Vagina (tissue), 2 donors: ENCODE measurements at regions of chr5 and their contacts with region 1.

Region 1: DNA sequence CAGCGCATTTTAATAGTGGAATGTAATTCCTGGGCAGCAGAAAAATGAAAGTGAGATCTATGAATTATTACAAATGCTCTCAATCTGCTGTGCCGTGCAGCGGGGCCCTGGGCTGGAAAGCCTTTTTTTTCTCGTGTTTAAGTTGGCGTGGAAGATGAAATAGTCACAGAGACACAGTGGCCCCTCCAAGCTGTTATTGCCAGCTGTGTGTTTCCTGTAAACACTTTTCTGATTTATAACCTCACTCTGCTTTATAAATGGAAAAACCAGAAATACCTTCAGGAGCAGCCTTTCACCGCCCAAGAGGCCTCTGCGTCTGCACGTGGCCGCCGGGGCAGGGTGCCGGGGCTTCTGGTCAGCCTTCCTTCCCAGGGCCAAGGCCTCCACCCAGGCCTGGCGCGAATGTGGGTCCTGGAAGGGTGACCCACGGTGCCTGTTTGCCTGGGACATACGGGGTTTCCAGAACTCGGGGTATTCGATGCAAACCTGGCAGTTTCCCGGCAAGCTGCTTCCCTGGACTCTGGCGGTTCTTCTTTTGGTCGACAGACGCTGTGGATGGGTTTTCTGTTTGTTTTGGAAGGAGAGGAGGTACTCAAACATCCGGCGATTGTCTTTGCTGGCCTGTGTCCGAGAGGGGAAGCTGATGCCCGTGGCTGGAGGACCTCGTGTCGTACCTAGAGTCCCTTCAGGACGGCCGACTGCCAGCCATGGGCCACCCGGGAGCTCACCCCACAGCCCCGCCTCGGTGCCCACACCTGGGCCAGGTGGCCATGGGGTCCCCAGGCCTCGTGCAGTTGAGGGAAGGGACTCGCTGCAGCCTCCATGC is 256.7 kb downstream of the PARP8 start:
- DNase-seq: no peak
- H3K4me3 ChIP-seq: no peak overlapping the region
- H3K27ac ChIP-seq: no peak overlapping the region
- H3K4me1 ChIP-seq: no peaks in the 10 kb centered on the region
- H3K27me3 ChIP-seq: no peaks in the 10 kb centered on the region
- CTCF ChIP-seq: no peak
- POLR2A ChIP-seq: no peak

Region 2: GRCh38 chr5:50995272-50995942 is 72.3 kb after region 1 on chr5:
- intact Hi-C with region 1: no loop called
- DNase-seq: no peak
- H3K4me3 ChIP-seq: no peak overlapping the region
- H3K27ac ChIP-seq: no peak overlapping the region
- H3K4me1 ChIP-seq: no peaks in the 10 kb centered on the region
- H3K27me3 ChIP-seq: no peaks in the 10 kb centered on the region
- CTCF ChIP-seq: no peak
- POLR2A ChIP-seq: no peak

Region 3: DNA sequence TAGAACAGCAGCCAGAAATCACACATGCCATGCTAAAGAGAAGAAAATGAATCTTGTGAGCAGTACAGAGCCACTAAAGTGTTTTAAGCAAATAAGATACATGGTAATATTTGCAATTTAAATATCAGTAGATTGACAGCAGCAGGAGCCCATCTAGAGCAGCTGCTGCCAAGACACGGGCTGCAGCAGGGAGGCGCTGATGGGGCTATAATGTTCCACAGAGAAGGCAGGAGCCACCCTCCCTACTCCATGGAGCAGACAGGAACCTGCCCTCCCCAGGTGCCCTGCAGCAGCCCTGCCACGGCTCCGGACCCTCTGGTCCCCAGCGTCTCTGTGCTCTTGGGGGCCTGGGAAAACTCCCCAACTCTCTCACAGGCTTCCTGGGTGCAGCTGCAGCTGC is 236.0 kb after region 1 on chr5:
- intact Hi-C with region 1: no loop called
- DNase-seq: no peak
- H3K4me3 ChIP-seq: no peak overlapping the region
- H3K27ac ChIP-seq: no peak overlapping the region
- H3K4me1 ChIP-seq: no peaks in the 10 kb centered on the region
- H3K27me3 ChIP-seq: no peaks in the 10 kb centered on the region
- CTCF ChIP-seq: no peak
- POLR2A ChIP-seq: no peak

Region 4: GRCh38 chr5:51618234-51618633 is 695.1 kb after region 1 on chr5:
- intact Hi-C with region 1: loop called (anchors 5 kb)
- DNase-seq: no peak
- H3K4me3 ChIP-seq: no peak overlapping the region
- H3K27ac ChIP-seq: no peak overlapping the region
- H3K4me1 ChIP-seq: no peaks in the 10 kb centered on the region
- H3K27me3 ChIP-seq: no peaks in the 10 kb centered on the region
- CTCF ChIP-seq: no peak
- POLR2A ChIP-seq: no peak